ENCODE measurements at regions of chr2 and their contacts with region 1.

Region 1: GRCh38 chr2:221573430-221574230 is 1.5 kb upstream of the EPHA4 start:
- DNase-seq: peak; percentile 75 to 76
- ATAC-seq: peak; percentile 76 to 90
- H3K4me3 ChIP-seq: peak overlapping the region; percentile 48
- H3K27ac ChIP-seq: peak overlapping the region; percentile 43 to 81
- H3K4me1 ChIP-seq: 0 out of 3 replicates have a peak, but pooled peaks cover 4% of the 10 kb centered on the region
- CTCF ChIP-seq: peak; percentile 86
- EP300 ChIP-seq: no peak
- POLR2A ChIP-seq: 0 out of 2 replicates have a peak, but pooled peaks have one; percentile 12
- RAD21 ChIP-seq: peak; percentile 88 to 97

Region 2: DNA sequence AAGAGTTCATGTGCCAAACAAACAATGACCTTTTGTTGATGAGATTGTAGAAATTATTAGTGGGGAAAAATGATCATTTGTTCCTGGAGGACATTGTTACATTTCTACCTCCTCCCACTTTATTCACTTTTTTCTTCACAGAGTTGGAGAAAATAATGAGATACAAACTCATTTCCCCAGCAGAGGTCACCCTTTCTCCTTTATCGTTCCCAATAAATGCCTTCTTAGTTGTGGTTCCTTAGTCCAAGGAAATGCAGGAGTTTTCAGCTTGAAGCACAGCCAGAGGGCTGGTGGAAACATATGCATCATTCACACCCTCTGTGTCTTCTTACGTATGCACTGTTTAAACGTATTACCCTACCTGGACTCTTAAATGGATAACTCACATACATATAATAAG is 1837.4 kb before region 1 on chr2:
- CTCF ChIA-PET with region 1: interaction called, 50 read pairs
- POLR2A ChIA-PET with region 1: no interaction called
- DNase-seq: peak; percentile 40 to 69
- ATAC-seq: peak; percentile 78 to 87
- H3K4me3 ChIP-seq: no peak overlapping the region
- H3K27ac ChIP-seq: no peak overlapping the region
- H3K4me1 ChIP-seq: no peaks in the 10 kb centered on the region
- CTCF ChIP-seq: peak; percentile 82
- EP300 ChIP-seq: no peak
- POLR2A ChIP-seq: no peak
- RAD21 ChIP-seq: peak; percentile 81 to 86

Region 3: GRCh38 chr2:219744600-219744999 is 1829.0 kb before region 1 on chr2:
- CTCF ChIA-PET with region 1: interaction called, 50 read pairs
- POLR2A ChIA-PET with region 1: no interaction called
- DNase-seq: no peak
- ATAC-seq: no peak
- H3K4me3 ChIP-seq: no peak overlapping the region
- H3K27ac ChIP-seq: no peak overlapping the region
- H3K4me1 ChIP-seq: no peaks in the 10 kb centered on the region
- CTCF ChIP-seq: no peak
- EP300 ChIP-seq: no peak
- POLR2A ChIP-seq: no peak
- RAD21 ChIP-seq: no peak